ENCODE measurements at regions of chr11 and their contacts with region 1.

Region 1: GRCh38 chr11:68206187-68206601 is 6.9 kb downstream of the KMT5B start:
- DNase-seq: peak; percentile 60 to 73
- ATAC-seq: peak; percentile 65 to 74; a peak in 5 of 6 replicates
- H3K4me3 ChIP-seq: no peak overlapping the region
- H3K27ac ChIP-seq: no peak overlapping the region
- H3K4me1 ChIP-seq: peaks cover 22% of the 10 kb centered on the region
- CTCF ChIP-seq: peak; percentile 74
- EP300 ChIP-seq: no peak
- POLR2A ChIP-seq: no peak
- RAD21 ChIP-seq: peak; percentile 63 to 74

Region 2: GRCh38 chr11:68191661-68192579 is 14.3 kb before region 1 on chr11:
- CTCF ChIA-PET with region 1: interaction called, 88 read pairs
- POLR2A ChIA-PET with region 1: no interaction called
- DNase-seq: no peak
- ATAC-seq: peak; percentile 8 to 61; a peak in 2 of 6 replicates
- H3K4me3 ChIP-seq: no peak overlapping the region
- H3K27ac ChIP-seq: no peak overlapping the region
- H3K4me1 ChIP-seq: peaks cover 14% of the 10 kb centered on the region
- CTCF ChIP-seq: no peak
- EP300 ChIP-seq: no peak
- POLR2A ChIP-seq: no peak
- RAD21 ChIP-seq: no peak

Region 3: GRCh38 chr11:68242616-68243015 is 36.4 kb after region 1 on chr11:
- CTCF ChIA-PET with region 1: interaction called, 6 read pairs
- POLR2A ChIA-PET with region 1: interaction called, 11 read pairs
- DNase-seq: no peak
- ATAC-seq: no peak
- H3K4me3 ChIP-seq: no peak overlapping the region
- H3K27ac ChIP-seq: no peak overlapping the region
- H3K4me1 ChIP-seq: no peaks in the 10 kb centered on the region
- CTCF ChIP-seq: no peak
- EP300 ChIP-seq: no peak
- POLR2A ChIP-seq: no peak
- RAD21 ChIP-seq: no peak

Measured in A549 (cell line).